T-cell (primary cell): ENCODE measurements at regions of chr12 and their contacts with region 1.

Region 1: DNA sequence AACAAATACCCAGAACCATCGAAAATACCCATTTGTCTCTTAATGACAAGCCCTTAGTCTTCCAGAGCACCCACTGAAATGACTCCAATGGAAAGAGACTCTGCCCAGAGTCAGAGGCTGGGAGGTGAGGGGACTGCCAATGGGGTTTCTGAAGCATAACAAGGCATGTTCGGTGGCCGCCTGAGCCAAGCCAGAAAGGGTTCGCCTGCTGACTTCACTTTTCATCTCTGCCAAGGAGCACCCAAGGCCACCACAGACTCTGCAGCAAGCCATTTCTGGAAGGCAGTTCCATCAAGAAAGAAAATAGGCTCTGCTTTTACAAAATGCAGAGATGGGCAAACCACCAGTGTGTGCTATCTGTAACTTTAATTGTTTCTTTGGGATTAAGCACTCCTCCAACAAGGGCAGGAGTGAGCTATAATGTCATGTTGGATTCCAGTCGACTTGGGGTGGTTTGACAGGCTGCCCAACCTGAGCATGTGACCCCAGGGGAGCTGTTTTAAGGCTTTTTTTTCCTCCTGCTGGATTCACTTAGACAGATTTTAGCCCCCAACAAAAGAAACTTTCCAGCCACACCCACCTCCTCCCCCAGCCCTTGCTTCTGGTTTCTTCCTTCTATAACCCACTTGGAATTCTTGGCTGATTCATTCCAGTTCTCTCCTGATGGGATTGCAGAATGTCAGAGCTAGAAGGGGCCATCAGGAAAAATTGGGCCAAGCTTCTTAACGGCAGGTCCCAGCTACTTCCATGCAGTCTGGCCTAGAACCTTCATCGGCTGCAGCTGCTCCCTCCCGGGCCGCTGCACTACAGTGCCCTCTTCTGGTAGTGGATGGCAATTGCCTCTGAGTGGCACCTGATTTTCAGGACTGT is 24.1 kb downstream of the CKAP4 start:
- DNase-seq: peak; percentile 38 to 82 (median 62)
- ATAC-seq: peak; percentile 47 to 81 (median 57)
- H3K4me3 ChIP-seq: no peak overlapping the region
- H3K4me3 Mint-ChIP-seq: no peak overlapping the region
- H3K27ac ChIP-seq: no peak overlapping the region
- H3K27ac Mint-ChIP-seq: peak overlapping the region in 1 of 2 donors; percentile 22
- H3K4me1 ChIP-seq: peaks cover 4 to 16% of the 10 kb centered on the region in 2 experiments
- H3K4me1 Mint-ChIP-seq: peaks cover 16 to 25% (median 19%) of the 10 kb centered on the region in 3 donors
- H3K27me3 ChIP-seq: peaks cover 0 to 4% of the 10 kb centered on the region in 2 experiments
- H3K27me3 Mint-ChIP-seq: peaks cover 16 to 19% of the 10 kb centered on the region in 2 donors

Region 2: DNA sequence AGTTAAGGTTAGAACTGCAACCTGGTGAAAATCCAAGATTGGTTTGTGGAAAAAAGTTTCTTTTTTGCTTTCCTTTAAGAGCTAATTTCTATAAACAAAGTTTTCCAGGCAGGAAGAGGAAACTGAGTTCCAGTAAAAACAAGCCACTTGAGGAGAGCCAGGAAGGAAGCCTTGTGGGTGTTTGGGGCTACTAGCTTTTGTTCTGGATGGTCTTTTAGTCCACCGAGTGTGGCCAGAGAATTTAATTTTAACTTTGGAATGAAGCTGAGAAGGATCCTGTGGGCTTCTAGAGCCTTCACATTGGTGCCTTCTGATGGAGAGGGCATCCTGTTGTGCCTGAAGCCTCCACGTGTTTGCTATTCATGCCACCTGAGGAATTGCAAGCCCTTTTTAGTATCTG is 565.3 kb before region 1 on chr12:
- CTCF ChIA-PET with region 1: no interaction called
- POLR2A ChIA-PET with region 1: no interaction called
- DNase-seq: no peak
- ATAC-seq: no peak
- H3K4me3 ChIP-seq: no peak overlapping the region
- H3K4me3 Mint-ChIP-seq: no peak overlapping the region
- H3K27ac ChIP-seq: no peak overlapping the region
- H3K27ac Mint-ChIP-seq: no peak overlapping the region
- H3K4me1 ChIP-seq: no peaks in the 10 kb centered on the region
- H3K4me1 Mint-ChIP-seq: no peaks in the 10 kb centered on the region
- H3K27me3 ChIP-seq: peaks cover 0 to 3% of the 10 kb centered on the region in 2 experiments
- H3K27me3 Mint-ChIP-seq: peaks cover under 1 to 8% of the 10 kb centered on the region in 2 donors

Region 3: DNA sequence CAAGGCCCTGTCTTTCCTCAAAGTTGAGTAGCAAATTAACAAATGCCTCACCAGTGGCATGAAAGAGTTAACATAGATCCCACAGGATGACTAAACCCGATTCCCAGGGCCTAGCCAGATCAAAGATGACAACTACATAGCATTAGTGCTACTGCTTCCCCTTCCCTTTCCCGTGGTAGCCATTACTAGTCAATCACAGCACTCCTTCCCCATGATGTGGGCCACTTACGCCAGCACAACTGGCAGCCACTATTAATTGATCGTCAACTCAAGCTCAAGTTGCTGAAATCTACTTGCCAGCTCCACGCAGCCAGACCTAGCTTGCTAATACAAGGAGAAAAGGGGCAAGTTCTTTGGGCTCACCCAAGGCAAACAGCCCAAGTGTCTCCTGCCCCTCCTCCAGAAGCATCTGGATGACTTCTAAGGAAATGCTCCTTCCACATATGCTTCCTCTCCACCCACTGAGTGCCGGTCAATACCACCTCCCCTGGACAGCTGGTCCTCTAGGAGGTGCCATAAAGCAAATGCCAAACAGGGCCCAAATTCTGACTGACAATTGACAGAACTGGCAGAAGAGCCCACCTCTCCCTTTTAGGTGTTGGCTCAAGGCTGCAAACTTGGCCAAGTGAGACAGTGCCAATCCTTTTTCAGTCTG is 157.5 kb before region 1 on chr12:
- CTCF ChIA-PET with region 1: no interaction called
- POLR2A ChIA-PET with region 1: no interaction called
- DNase-seq: no peak
- ATAC-seq: no peak
- H3K4me3 ChIP-seq: no peak overlapping the region
- H3K4me3 Mint-ChIP-seq: no peak overlapping the region
- H3K27ac ChIP-seq: no peak overlapping the region
- H3K27ac Mint-ChIP-seq: no peak overlapping the region
- H3K4me1 ChIP-seq: no peaks in the 10 kb centered on the region
- H3K4me1 Mint-ChIP-seq: no peaks in the 10 kb centered on the region
- H3K27me3 ChIP-seq: peaks cover 0 to 10% of the 10 kb centered on the region in 2 experiments
- H3K27me3 Mint-ChIP-seq: peaks cover 0 to 17% of the 10 kb centered on the region in 2 donors

Region 4: DNA sequence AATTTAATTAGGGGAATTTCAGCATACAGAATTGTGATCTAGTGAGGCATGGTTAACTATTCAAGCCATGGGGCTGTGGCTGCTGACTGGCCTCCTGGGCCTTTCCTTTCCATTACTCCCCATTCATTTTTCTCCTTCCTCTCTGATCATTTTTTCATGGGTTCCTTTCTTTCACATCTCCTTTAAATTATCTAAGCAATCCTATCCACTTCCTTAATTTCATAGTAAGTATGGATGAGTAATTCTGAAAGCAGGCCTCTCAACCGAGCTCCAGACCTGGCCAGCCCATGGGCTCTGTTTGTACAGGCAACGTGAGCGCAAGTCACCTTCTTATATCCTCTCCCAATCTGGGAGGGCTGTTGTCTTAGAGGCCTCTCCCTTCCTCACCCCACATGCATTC is 10.7 kb after region 1 on chr12:
- CTCF ChIA-PET with region 1: interaction called, 6 to 11 read pairs
- POLR2A ChIA-PET with region 1: interaction called, 3 read pairs
- DNase-seq: no peak
- ATAC-seq: no peak
- H3K4me3 ChIP-seq: no peak overlapping the region
- H3K4me3 Mint-ChIP-seq: no peak overlapping the region
- H3K27ac ChIP-seq: no peak overlapping the region
- H3K27ac Mint-ChIP-seq: no peak overlapping the region
- H3K4me1 ChIP-seq: no peaks in the 10 kb centered on the region
- H3K4me1 Mint-ChIP-seq: no peaks in the 10 kb centered on the region
- H3K27me3 ChIP-seq: peaks cover 0 to 2% of the 10 kb centered on the region in 2 experiments
- H3K27me3 Mint-ChIP-seq: no peaks in the 10 kb centered on the region

Region 5: GRCh38 chr12:106247674-106248311 is 24.1 kb after region 1 on chr12 and contains the start of gene CKAP4:
- CTCF ChIA-PET with region 1: interaction called, 4 to 11 read pairs
- POLR2A ChIA-PET with region 1: no interaction called
- DNase-seq: peak in 34 of 35 experiments; percentile 9 to 80 (median 40)
- ATAC-seq: peak; percentile 62 to 76 (median 70)
- H3K4me3 ChIP-seq: peak within 1 kb of the TSS; percentile 77 to 80
- H3K4me3 Mint-ChIP-seq: peak within 1 kb of the TSS; percentile 81 to 82 (median 82)
- H3K27ac ChIP-seq: peak within 1 kb of the TSS; percentile 92
- H3K27ac Mint-ChIP-seq: peak within 1 kb of the TSS; percentile 84 to 94
- H3K4me1 ChIP-seq: peaks cover 3 to 25% of the 10 kb centered on the region in 2 experiments
- H3K4me1 Mint-ChIP-seq: peaks cover 27 to 43% (median 40%) of the 10 kb centered on the region in 3 donors
- H3K27me3 ChIP-seq: no peaks in the 10 kb centered on the region
- H3K27me3 Mint-ChIP-seq: no peaks in the 10 kb centered on the region
- total RNA-seq, gene CKAP4: 9.0 to 13.8 (median 11.7) TPM

Region 6: GRCh38 chr12:106282457-106283097 is 58.9 kb after region 1 on chr12:
- CTCF ChIA-PET with region 1: interaction called, 11 to 22 read pairs
- POLR2A ChIA-PET with region 1: interaction called in 1 of 2 experiments, 3 read pairs
- DNase-seq: peak in 33 of 35 experiments; percentile 12 to 78 (median 31)
- ATAC-seq: peak; percentile 69 to 75 (median 75)
- H3K4me3 ChIP-seq: no peak overlapping the region
- H3K4me3 Mint-ChIP-seq: no peak overlapping the region
- H3K27ac ChIP-seq: no peak overlapping the region
- H3K27ac Mint-ChIP-seq: no peak overlapping the region
- H3K4me1 ChIP-seq: no peaks in the 10 kb centered on the region
- H3K4me1 Mint-ChIP-seq: peaks cover 0 to 1% (median 0%) of the 10 kb centered on the region in 3 donors
- H3K27me3 ChIP-seq: peaks cover 4 to 9% of the 10 kb centered on the region in 2 experiments
- H3K27me3 Mint-ChIP-seq: peaks cover 11% of the 10 kb centered on the region in 2 donors

Region 7: GRCh38 chr12:106302401-106303201 is 78.9 kb after region 1 on chr12 and contains the start of gene TCP11L2:
- CTCF ChIA-PET with region 1: interaction called in 1 of 2 experiments, 26 read pairs
- POLR2A ChIA-PET with region 1: interaction called, 3 to 4 read pairs
- DNase-seq: peak; percentile 81 to 96 (median 92)
- ATAC-seq: peak; percentile 57 to 74 (median 64)
- H3K4me3 ChIP-seq: peak within 1 kb of the TSS; percentile 97 to 99
- H3K4me3 Mint-ChIP-seq: peak within 1 kb of the TSS; percentile 93 to 97 (median 96)
- H3K27ac ChIP-seq: peak within 1 kb of the TSS; percentile 100
- H3K27ac Mint-ChIP-seq: peak within 1 kb of the TSS; percentile 100
- H3K4me1 ChIP-seq: peaks cover 31 to 34% of the 10 kb centered on the region in 2 experiments
- H3K4me1 Mint-ChIP-seq: peaks cover 57 to 68% (median 62%) of the 10 kb centered on the region in 3 donors
- H3K27me3 ChIP-seq: no peaks in the 10 kb centered on the region
- H3K27me3 Mint-ChIP-seq: no peaks in the 10 kb centered on the region
- total RNA-seq, gene TCP11L2: 139 to 213 (median 157) TPM

Region 8: GRCh38 chr12:106357549-106358395 is 134.1 kb after region 1 on chr12 and contains the start of gene POLR3B:
- CTCF ChIA-PET with region 1: interaction called, 3 to 15 read pairs
- POLR2A ChIA-PET with region 1: no interaction called
- DNase-seq: peak; percentile 92 to 98 (median 96)
- ATAC-seq: peak; percentile 91 to 93 (median 92)
- H3K4me3 ChIP-seq: peak within 1 kb of the TSS; percentile 80 to 89
- H3K4me3 Mint-ChIP-seq: peak within 1 kb of the TSS; percentile 89 to 94 (median 93)
- H3K27ac ChIP-seq: peak within 1 kb of the TSS; percentile 80
- H3K27ac Mint-ChIP-seq: peak within 1 kb of the TSS; percentile 92 to 96
- H3K4me1 ChIP-seq: peaks cover 10 to 13% of the 10 kb centered on the region in 2 experiments
- H3K4me1 Mint-ChIP-seq: peaks cover 17 to 18% (median 17%) of the 10 kb centered on the region in 3 donors
- H3K27me3 ChIP-seq: no peaks in the 10 kb centered on the region
- H3K27me3 Mint-ChIP-seq: no peaks in the 10 kb centered on the region
- total RNA-seq, gene POLR3B: 6.3 to 8.4 (median 7.0) TPM

Region 9: GRCh38 chr12:107967170-107967569 is 1743.5 kb after region 1 on chr12:
- CTCF ChIA-PET with region 1: no interaction called
- POLR2A ChIA-PET with region 1: no interaction called
- DNase-seq: no peak
- ATAC-seq: no peak
- H3K4me3 ChIP-seq: no peak overlapping the region
- H3K4me3 Mint-ChIP-seq: no peak overlapping the region
- H3K27ac ChIP-seq: no peak overlapping the region
- H3K27ac Mint-ChIP-seq: no peak overlapping the region
- H3K4me1 ChIP-seq: no peaks in the 10 kb centered on the region
- H3K4me1 Mint-ChIP-seq: no peaks in the 10 kb centered on the region
- H3K27me3 ChIP-seq: peaks cover 0 to 3% of the 10 kb centered on the region in 2 experiments
- H3K27me3 Mint-ChIP-seq: peaks cover 3 to 20% of the 10 kb centered on the region in 2 donors